Activated CD8-positive, alpha-beta memory T cell treated with anti-CD3 and anti-CD28 coated beads, Interleukin-2, amount 10 ng/mL, durations not matched to agents 7 days and 5 days (primary cell): ENCODE measurements at regions of chr6 and their contacts with region 1.

Region 1: DNA sequence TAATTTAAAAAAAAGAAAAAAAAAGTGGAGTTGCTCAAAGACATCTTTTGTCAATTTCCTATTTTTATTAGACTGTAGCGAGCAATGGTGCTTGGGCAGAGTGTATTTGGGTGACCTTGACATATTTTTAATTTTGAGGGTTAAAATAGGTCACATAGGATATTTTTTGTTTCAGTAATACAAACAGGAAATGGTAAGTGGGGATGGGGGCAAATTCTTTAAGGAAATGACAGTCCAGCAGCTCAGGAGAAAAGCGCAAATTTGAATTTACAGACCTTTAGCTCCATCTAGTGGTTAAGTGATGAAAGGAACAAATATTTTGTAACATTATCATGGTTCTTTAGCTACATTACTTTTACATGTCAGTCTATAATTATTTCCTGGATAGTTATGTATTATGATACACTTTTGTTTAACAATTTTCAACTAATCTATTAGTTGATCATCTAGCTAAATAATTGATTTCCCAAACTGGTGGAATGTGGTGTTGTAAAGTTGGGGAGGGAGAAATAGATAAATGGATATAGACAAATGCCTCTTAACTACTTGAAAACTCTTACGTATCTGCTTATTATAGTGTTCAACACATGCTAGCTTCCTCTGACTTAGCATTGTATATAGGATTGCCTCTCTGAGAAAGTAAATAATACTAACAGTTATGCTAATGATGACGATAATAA is 10.0 kb downstream of the CITED2 start:
- DNase-seq: no peak
- ATAC-seq: peak; percentile 28
- H3K4me3 Mint-ChIP-seq: no peak overlapping the region
- H3K27ac Mint-ChIP-seq: peak overlapping the region; percentile 39
- H3K4me1 Mint-ChIP-seq: peaks cover 48% of the 10 kb centered on the region
- H3K27me3 Mint-ChIP-seq: no peaks in the 10 kb centered on the region

Region 2: DNA sequence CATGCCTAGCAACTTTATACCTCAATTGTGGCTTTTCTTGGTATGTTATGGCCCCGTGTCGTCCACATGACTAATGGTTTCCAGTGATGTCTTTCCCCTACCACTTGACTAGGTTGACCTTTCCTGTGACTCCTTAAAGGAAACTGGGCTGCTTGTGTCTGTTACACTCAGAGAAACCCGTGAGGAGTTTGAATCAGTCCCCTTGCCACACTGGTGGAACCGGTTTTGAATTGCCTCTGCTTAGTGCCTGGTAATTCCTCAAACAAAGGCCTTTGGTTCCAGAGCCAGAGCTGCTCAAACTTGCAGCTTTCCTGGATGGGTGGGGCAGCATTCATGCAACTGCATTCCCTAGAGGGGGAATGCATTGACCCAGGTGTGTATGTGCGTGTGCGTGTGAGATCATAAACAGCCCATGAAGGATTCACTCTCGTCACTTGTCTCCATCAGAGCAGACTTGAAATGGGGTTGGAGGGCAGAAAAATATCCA is 546.6 kb before region 1 on chr6:
- CTCF ChIA-PET with region 1: interaction called, 11 read pairs
- DNase-seq: peak; percentile 44
- ATAC-seq: peak; percentile 34
- H3K4me3 Mint-ChIP-seq: no peak overlapping the region
- H3K27ac Mint-ChIP-seq: peak overlapping the region; percentile 50
- H3K4me1 Mint-ChIP-seq: peaks cover 25% of the 10 kb centered on the region
- H3K27me3 Mint-ChIP-seq: no peaks in the 10 kb centered on the region

Region 3: DNA sequence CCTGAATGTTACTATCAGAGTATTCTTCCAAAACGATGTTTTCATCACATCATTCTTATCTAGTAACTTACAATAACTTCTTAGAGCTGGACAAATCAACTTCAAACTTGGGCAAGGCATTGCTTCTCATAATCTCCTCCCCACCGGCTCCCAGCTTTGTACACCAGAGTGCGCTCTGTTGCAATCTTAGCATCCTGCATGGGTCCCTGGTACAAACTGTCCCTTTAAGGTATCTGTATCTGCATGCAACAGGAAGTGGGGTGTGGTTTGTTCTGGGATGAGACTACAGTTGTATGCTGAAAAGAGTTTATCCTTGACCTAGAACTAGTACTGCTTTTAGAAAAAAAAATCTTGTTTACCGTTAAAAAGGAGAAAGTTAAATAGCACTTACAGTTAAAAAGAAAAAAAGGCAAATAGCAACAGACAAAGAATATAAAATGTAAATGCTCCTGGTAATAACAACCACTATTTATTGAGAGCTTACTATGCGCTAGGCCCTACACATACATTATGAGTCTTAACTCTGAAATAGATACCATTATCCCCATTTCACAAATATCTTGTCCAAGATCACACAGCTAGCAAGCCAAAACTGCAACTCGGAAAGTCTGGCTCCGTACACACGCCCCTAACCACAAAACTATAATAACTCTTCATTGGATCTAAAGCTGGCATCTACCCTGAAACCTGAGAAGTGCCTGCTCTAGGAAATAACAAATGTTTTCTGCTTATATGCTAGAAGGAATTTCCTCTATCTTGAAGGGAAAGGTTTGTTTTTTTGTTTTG is 239.4 kb before region 1 on chr6:
- CTCF ChIA-PET with region 1: interaction called, 36 read pairs
- DNase-seq: peak; percentile 93
- ATAC-seq: peak; percentile 98
- H3K4me3 Mint-ChIP-seq: peak overlapping the region; percentile 60
- H3K27ac Mint-ChIP-seq: peak overlapping the region; percentile 95
- H3K4me1 Mint-ChIP-seq: peaks cover 39% of the 10 kb centered on the region
- H3K27me3 Mint-ChIP-seq: no peaks in the 10 kb centered on the region

Region 4: GRCh38 chr6:139250296-139251044 is 114.0 kb before region 1 on chr6:
- CTCF ChIA-PET with region 1: interaction called, 14 read pairs
- DNase-seq: peak; percentile 84
- ATAC-seq: peak; percentile 95
- H3K4me3 Mint-ChIP-seq: peak overlapping the region; percentile 44
- H3K27ac Mint-ChIP-seq: peak overlapping the region; percentile 86
- H3K4me1 Mint-ChIP-seq: peaks cover 40% of the 10 kb centered on the region
- H3K27me3 Mint-ChIP-seq: no peaks in the 10 kb centered on the region

Region 5: GRCh38 chr6:139375232-139376016 is 11.0 kb after region 1 on chr6:
- CTCF ChIA-PET with region 1: interaction called, 34 read pairs
- DNase-seq: peak; percentile 91
- ATAC-seq: peak; percentile 59
- H3K4me3 Mint-ChIP-seq: peak overlapping the region; percentile 96
- H3K27ac Mint-ChIP-seq: peak overlapping the region; percentile 97
- H3K4me1 Mint-ChIP-seq: peaks cover 46% of the 10 kb centered on the region
- H3K27me3 Mint-ChIP-seq: no peaks in the 10 kb centered on the region

Region 6: GRCh38 chr6:139407718-139408222 is 43.3 kb after region 1 on chr6:
- CTCF ChIA-PET with region 1: no interaction called
- DNase-seq: no peak
- ATAC-seq: no peak
- H3K4me3 Mint-ChIP-seq: no peak overlapping the region
- H3K27ac Mint-ChIP-seq: no peak overlapping the region
- H3K4me1 Mint-ChIP-seq: no peaks in the 10 kb centered on the region
- H3K27me3 Mint-ChIP-seq: no peaks in the 10 kb centered on the region

Region 7: DNA sequence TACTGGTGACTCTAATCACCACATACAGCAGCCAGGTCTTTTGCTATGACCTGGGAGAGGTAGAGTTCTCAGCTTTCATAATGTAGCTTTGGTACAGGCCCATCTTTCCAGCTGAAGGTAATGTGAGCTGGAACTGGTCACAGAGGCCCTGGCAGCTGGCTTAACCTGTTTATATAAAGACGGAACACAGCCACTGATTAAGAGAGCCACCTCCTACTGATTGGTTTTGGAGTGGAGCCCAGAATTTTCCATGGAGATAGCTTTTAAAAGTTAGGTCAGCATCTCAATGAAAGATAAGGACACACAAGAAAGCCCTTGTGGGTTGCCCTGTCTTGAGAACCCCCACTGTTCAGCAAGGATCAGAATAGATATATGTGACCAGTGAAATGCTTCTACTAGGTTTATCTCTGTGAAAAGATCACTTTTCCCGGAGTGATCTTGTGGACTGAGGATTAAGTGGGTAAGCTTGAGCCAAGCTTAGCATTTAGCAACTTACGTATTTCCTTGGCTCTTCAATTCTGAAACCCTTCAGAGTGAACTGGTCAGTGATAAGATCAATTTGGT is 223.7 kb after region 1 on chr6:
- CTCF ChIA-PET with region 1: no interaction called
- DNase-seq: no peak
- ATAC-seq: no peak
- H3K4me3 Mint-ChIP-seq: no peak overlapping the region
- H3K27ac Mint-ChIP-seq: no peak overlapping the region
- H3K4me1 Mint-ChIP-seq: peaks cover 3% of the 10 kb centered on the region
- H3K27me3 Mint-ChIP-seq: peaks cover 3% of the 10 kb centered on the region

Region 8: DNA sequence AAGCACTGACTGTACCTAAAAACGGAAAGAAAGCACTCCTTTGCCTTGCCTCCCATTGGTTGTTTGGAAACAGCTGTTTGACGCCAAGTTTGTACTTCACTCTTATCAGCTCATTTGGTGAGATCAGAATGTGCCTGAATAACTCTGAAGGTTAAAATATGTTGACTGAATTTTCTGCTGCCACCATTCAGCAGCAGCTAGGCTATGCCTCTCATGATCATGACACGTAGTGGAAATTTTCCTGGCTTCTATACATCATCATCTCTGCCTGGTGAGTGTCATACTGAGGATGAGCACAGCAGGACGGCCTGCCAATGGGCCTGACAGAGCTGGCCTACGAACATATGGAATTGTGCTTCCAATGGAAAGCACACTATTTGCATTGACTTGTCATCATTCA is 714.9 kb after region 1 on chr6:
- CTCF ChIA-PET with region 1: no interaction called
- DNase-seq: no peak
- ATAC-seq: no peak
- H3K4me3 Mint-ChIP-seq: no peak overlapping the region
- H3K27ac Mint-ChIP-seq: no peak overlapping the region
- H3K4me1 Mint-ChIP-seq: no peaks in the 10 kb centered on the region
- H3K27me3 Mint-ChIP-seq: no peaks in the 10 kb centered on the region